Naive thymus-derived CD4-positive, alpha-beta T cell (primary cell): ENCODE measurements at regions of chr13 and their contacts with region 1.

Region 1: DNA sequence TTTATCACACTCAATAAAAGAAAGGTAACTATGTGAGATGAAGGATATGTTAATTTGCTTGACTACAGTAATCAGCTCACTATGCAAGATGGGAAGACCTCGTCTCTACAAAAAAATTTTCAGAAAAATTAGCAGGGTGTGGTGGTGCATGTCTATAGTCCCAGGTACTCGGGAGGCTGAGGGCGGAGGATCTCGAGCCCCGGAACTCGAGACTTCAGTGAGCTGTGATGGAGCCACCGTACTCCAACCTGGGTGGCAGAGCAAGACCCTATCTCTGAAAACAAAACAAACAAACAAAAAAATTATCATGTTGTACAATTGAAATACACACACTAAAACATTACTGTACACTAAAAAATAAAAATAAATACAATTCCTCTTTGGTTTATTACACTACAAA is 376.7 kb upstream of the KLHL1 start:
- DNase-seq: no peak
- ATAC-seq: no peak
- H3K4me3 ChIP-seq: no peak overlapping the region
- H3K4me3 Mint-ChIP-seq: no peak overlapping the region
- H3K27ac ChIP-seq: no peak overlapping the region
- H3K27ac Mint-ChIP-seq: no peak overlapping the region
- H3K4me1 ChIP-seq: no peaks in the 10 kb centered on the region
- H3K4me1 Mint-ChIP-seq: no peaks in the 10 kb centered on the region
- H3K27me3 ChIP-seq: no peaks in the 10 kb centered on the region
- H3K27me3 Mint-ChIP-seq: no peaks in the 10 kb centered on the region

Region 2: GRCh38 chr13:70502944-70503343 is 18.0 kb after region 1 on chr13:
- CTCF ChIA-PET with region 1: no interaction called
- POLR2A ChIA-PET with region 1: no interaction called
- intact Hi-C with region 1: loop called in 1 of 2 experiments (anchors 1 kb)
- DNase-seq: no peak
- ATAC-seq: no peak
- H3K4me3 ChIP-seq: no peak overlapping the region
- H3K4me3 Mint-ChIP-seq: no peak overlapping the region
- H3K27ac ChIP-seq: no peak overlapping the region
- H3K27ac Mint-ChIP-seq: no peak overlapping the region
- H3K4me1 ChIP-seq: no peaks in the 10 kb centered on the region
- H3K4me1 Mint-ChIP-seq: no peaks in the 10 kb centered on the region
- H3K27me3 ChIP-seq: no peaks in the 10 kb centered on the region
- H3K27me3 Mint-ChIP-seq: no peaks in the 10 kb centered on the region

Region 3: DNA sequence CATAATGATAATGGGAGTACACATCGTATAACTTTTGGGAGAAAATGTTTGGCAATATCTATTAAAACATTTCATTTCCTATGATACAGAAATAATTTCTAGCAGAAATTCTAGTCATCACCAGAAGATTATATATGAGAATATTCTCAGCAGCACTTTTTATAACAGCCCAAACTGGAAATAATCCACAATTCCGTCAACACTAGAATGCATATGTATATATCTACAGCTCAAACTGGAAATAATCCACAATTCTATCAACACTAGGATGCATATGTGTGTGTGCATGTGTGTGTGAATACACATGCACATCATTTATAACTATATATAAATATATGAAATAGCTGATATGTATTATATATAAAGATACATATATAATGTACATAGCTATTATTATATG is 31.3 kb after region 1 on chr13:
- CTCF ChIA-PET with region 1: no interaction called
- POLR2A ChIA-PET with region 1: no interaction called
- intact Hi-C with region 1: no loop called
- DNase-seq: no peak
- ATAC-seq: no peak
- H3K4me3 ChIP-seq: no peak overlapping the region
- H3K4me3 Mint-ChIP-seq: no peak overlapping the region
- H3K27ac ChIP-seq: no peak overlapping the region
- H3K27ac Mint-ChIP-seq: no peak overlapping the region
- H3K4me1 ChIP-seq: no peaks in the 10 kb centered on the region
- H3K4me1 Mint-ChIP-seq: no peaks in the 10 kb centered on the region
- H3K27me3 ChIP-seq: no peaks in the 10 kb centered on the region
- H3K27me3 Mint-ChIP-seq: no peaks in the 10 kb centered on the region